ENCODE measurements at regions of chr3 and their contacts with region 1.

Region 1: DNA sequence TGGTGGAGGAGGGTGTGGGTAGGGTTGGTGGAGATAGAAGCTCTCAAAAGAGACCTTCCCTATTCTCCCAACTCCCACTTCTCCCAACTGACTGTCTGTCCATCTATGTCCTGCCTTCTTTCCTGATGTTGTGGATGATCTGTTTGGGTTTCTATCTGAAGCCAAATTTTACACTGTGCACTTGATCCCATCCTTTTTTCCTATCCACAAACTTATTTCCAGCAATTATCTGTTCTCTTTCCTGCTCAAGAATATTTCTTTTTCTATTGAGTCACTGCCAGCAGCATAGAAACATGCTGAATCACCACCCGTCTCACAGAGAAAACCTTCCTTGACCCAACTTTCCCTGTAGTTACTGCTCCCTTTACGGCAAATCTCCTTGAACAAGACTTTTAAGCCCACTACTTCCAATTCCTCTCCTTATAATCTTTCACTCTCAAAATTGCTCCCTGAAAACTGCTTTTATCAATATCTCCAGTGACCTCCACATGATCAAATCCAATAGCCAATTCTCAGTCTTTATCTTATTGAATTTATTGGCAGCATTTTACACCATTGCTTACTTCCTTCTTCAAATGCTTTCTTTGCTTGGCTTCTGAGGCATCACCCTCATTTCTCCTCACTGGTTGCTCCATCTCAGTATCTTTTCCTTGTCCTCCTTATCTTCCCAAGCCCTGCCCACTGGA is 141.2 kb upstream of the SLC7A14 start:
- DNase-seq: peak; percentile 43 to 76
- H3K4me3 ChIP-seq: peak overlapping the region; percentile 19; the same call in 1 of the 2 replicates
- H3K27ac ChIP-seq: peak overlapping the region; percentile 81
- H3K4me1 ChIP-seq: peaks cover 27% of the 10 kb centered on the region
- H3K27me3 ChIP-seq: no peaks in the 10 kb centered on the region
- CTCF ChIP-seq: no peak

Region 2: GRCh38 chr3:170107941-170108340 is 619.2 kb before region 1 on chr3:
- CTCF ChIA-PET with region 1: no interaction called
- POLR2A ChIA-PET with region 1: interaction called, 11 read pairs
- intact Hi-C with region 1: no loop called
- DNase-seq: no peak
- H3K4me3 ChIP-seq: no peak overlapping the region
- H3K27ac ChIP-seq: no peak overlapping the region
- H3K4me1 ChIP-seq: no peaks in the 10 kb centered on the region
- H3K27me3 ChIP-seq: no peaks in the 10 kb centered on the region
- CTCF ChIP-seq: no peak

Region 3: DNA sequence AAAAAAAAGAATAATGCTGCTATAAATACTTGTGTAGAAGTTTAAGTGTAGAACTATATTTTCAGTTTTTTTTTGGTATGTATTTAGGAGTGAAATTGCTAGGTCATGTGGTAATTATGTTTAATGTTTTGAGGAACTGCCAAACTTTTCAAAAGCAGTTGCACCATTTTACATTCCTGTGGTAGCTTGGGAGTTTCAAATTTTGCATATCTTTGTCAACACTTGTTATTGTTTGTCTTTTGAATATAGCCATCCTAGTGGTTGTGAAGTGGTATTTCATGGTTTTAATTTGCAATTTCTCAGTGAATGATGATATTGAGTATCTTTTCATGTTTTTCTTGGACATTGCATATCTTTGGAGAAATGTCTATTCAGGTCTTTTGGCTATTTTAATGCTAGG is 339.2 kb before region 1 on chr3:
- CTCF ChIA-PET with region 1: no interaction called
- POLR2A ChIA-PET with region 1: interaction called, 10 read pairs
- intact Hi-C with region 1: no loop called
- DNase-seq: peak in 1 of 2 experiments; percentile 64
- H3K4me3 ChIP-seq: no peak overlapping the region
- H3K27ac ChIP-seq: no peak overlapping the region
- H3K4me1 ChIP-seq: no peaks in the 10 kb centered on the region
- H3K27me3 ChIP-seq: no peaks in the 10 kb centered on the region
- CTCF ChIP-seq: peak; percentile 41

Region 4: DNA sequence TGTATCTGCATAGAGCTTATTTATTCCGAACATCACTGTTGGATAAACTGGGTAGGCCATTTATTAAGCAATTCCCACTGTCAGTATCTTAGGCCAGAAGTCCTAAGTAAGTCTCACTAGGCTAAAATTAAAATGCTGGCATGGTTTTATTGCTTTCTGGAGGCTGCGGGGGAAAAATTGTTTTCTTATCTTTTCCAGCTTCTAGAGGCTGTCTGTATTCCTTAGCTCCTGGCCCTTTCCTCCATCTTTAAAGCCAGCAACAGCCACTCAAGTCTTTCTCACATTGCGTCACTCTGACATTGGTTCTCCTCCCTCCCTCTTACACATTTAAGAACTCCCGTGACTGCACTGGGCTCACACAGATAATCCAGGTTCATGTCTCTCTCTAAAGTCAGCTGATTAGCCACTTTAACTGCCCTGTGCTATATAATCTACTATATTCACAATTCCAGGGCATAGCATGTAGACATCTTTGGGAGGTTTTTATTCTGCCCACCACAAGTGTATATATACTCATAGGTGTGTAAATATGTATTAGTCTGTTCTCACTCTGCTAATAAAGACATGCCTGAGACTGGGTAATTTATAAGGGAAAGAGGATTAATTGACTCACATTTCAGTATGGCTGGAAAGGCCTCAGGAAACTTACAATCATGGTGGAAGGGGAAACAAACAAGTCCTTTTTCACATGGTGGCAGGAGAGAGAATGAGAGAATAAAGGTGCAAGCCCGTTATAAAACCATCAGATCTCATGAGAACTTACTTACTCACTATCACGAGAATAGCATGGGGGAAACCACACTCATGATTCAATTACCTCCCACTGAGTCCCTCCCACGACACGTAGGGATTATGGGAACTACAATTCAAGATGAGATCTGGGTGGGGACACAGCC is 27.7 kb before region 1 on chr3:
- CTCF ChIA-PET with region 1: no interaction called
- POLR2A ChIA-PET with region 1: no interaction called
- intact Hi-C with region 1: no loop called
- DNase-seq: no peak
- H3K4me3 ChIP-seq: no peak overlapping the region
- H3K27ac ChIP-seq: no peak overlapping the region
- H3K4me1 ChIP-seq: no peaks in the 10 kb centered on the region
- H3K27me3 ChIP-seq: no peaks in the 10 kb centered on the region
- CTCF ChIP-seq: no peak

Measured in PC-9 (cell line).